ENCODE measurements at regions of chr22 and their contacts with region 1.

Region 1: GRCh38 chr22:35627264-35628041 is 10.3 kb upstream of the MB start:
- DNase-seq: peak; percentile 79
- ATAC-seq: peak; percentile 68
- H3K4me3 ChIP-seq: peak overlapping the region; percentile 63
- H3K27ac ChIP-seq: peak overlapping the region; percentile 98
- H3K4me1 ChIP-seq: peaks cover 34% of the 10 kb centered on the region
- H3K27me3 ChIP-seq: no peaks in the 10 kb centered on the region
- CTCF ChIP-seq: peak; percentile 70

Region 2: DNA sequence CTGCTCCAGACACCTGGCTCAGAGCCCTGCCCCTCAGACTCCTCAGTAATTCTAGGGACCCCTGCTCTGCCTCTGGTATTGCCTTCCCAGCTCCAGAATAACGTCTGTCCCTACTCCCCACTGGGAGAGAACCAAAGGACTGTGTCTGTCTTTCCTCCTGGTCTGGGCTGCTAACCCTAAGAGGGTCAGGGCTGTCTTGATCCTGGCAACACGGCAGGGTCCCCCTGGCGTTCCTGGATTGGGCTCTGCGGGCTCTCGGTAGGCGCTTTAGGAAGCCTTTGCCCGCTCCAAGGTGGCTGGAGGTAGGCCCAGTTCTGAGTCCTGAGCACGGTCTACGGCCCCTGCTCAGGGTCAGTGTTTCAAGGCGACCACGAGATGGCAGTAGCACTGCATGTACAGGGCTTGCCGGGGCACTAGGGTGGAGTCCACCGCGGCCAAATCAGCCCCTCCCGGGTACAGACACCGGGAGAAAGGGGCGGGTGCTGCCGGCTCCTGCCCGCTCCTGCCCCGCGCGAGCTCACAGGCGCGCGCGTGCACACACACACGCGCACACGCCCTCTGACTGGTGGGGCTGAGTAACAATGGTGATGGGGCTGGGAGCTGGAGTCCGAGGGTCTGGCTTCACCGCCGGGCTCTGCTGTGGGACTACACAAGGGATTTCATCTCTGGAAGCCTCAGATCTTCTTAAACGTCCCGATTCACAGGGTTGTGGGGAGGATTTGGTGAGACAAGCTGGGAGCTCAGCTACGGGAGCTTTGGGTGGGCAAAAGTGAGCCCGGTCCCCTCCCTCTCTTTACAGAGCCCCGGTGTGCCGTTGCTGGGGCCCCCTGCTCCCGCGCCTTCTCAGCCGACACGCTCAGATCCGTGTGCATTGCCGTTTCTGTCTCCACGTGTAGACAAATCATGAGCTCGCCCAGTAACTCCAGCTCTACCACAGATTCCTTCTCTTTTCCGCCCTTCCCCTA is 276.6 kb before region 1 on chr22:
- CTCF ChIA-PET with region 1: interaction called, 5 read pairs
- POLR2A ChIA-PET with region 1: interaction called, 3 read pairs
- intact Hi-C with region 1: loop called (anchors 1 kb)
- DNase-seq: peak; percentile 81
- ATAC-seq: peak; percentile 95
- H3K4me3 ChIP-seq: peak overlapping the region; percentile 70
- H3K27ac ChIP-seq: peak overlapping the region; percentile 52
- H3K4me1 ChIP-seq: peaks cover 11% of the 10 kb centered on the region
- H3K27me3 ChIP-seq: no peaks in the 10 kb centered on the region
- CTCF ChIP-seq: peak; percentile 69

Region 3: DNA sequence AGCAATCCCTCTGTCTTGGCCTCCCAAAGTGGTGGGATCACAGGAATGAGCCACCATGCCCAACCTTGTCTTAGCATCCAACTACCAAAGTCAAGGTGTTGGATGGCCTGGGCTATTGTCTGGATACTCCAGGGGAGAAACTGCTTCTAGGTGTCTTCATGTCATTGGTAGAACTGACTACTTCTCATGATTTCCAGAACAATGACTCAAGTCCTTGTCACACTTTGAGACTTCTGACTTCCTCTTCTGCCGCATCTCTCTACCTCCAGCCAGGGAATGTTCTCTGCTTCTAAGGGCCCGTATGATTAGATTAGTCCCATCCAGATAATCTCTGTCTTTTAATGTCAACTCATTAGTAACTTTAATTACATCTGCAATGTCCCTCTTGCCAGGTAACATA is 51.4 kb after region 1 on chr22:
- CTCF ChIA-PET with region 1: no interaction called
- POLR2A ChIA-PET with region 1: no interaction called
- intact Hi-C with region 1: no loop called
- DNase-seq: no peak
- ATAC-seq: no peak
- H3K4me3 ChIP-seq: no peak overlapping the region
- H3K27ac ChIP-seq: no peak overlapping the region
- H3K4me1 ChIP-seq: no peaks in the 10 kb centered on the region
- H3K27me3 ChIP-seq: no peaks in the 10 kb centered on the region
- CTCF ChIP-seq: no peak

Region 4: GRCh38 chr22:35697142-35697541 is 69.7 kb after region 1 on chr22:
- CTCF ChIA-PET with region 1: no interaction called
- POLR2A ChIA-PET with region 1: no interaction called
- intact Hi-C with region 1: no loop called
- DNase-seq: no peak
- ATAC-seq: no peak
- H3K4me3 ChIP-seq: no peak overlapping the region
- H3K27ac ChIP-seq: no peak overlapping the region
- H3K4me1 ChIP-seq: no peaks in the 10 kb centered on the region
- H3K27me3 ChIP-seq: no peaks in the 10 kb centered on the region
- CTCF ChIP-seq: no peak

Region 5: GRCh38 chr22:35742342-35743100 is 115.1 kb after region 1 on chr22:
- CTCF ChIA-PET with region 1: no interaction called
- POLR2A ChIA-PET with region 1: no interaction called
- intact Hi-C with region 1: loop called (anchors 5 kb)
- DNase-seq: peak; percentile 63
- ATAC-seq: peak; percentile 75
- H3K4me3 ChIP-seq: no peak overlapping the region
- H3K27ac ChIP-seq: peak overlapping the region; percentile 77
- H3K4me1 ChIP-seq: peaks cover 22% of the 10 kb centered on the region
- H3K27me3 ChIP-seq: no peaks in the 10 kb centered on the region
- CTCF ChIP-seq: no peak

Region 6: GRCh38 chr22:35840302-35840739 is 212.9 kb after region 1 on chr22:
- CTCF ChIA-PET with region 1: interaction called, 10 read pairs
- POLR2A ChIA-PET with region 1: interaction called, 4 read pairs
- intact Hi-C with region 1: loop called (anchors 1 kb)
- DNase-seq: peak; percentile 91
- ATAC-seq: peak; percentile 75
- H3K4me3 ChIP-seq: peak overlapping the region; percentile 83
- H3K27ac ChIP-seq: peak overlapping the region; percentile 49
- H3K4me1 ChIP-seq: peaks cover 27% of the 10 kb centered on the region; the same call in 1 of the 2 replicates
- H3K27me3 ChIP-seq: no peaks in the 10 kb centered on the region
- CTCF ChIP-seq: no peak

Region 7: GRCh38 chr22:35947794-35948425 is 320.5 kb after region 1 on chr22:
- CTCF ChIA-PET with region 1: interaction called, 14 read pairs
- POLR2A ChIA-PET with region 1: no interaction called
- intact Hi-C with region 1: no loop called
- DNase-seq: peak; percentile 58
- ATAC-seq: peak; percentile 100
- H3K4me3 ChIP-seq: no peak overlapping the region
- H3K27ac ChIP-seq: no peak overlapping the region
- H3K4me1 ChIP-seq: 0 out of 2 replicates have a peak, but pooled peaks cover 3% of the 10 kb centered on the region
- H3K27me3 ChIP-seq: no peaks in the 10 kb centered on the region
- CTCF ChIP-seq: no peak

Region 8: GRCh38 chr22:36123673-36124630 is 496.5 kb after region 1 on chr22:
- CTCF ChIA-PET with region 1: interaction called, 7 read pairs
- POLR2A ChIA-PET with region 1: no interaction called
- intact Hi-C with region 1: loop called (anchors 1 kb)
- DNase-seq: peak; percentile 92
- ATAC-seq: peak; percentile 97
- H3K4me3 ChIP-seq: peak overlapping the region; percentile 43; the same call in 1 of the 2 replicates
- H3K27ac ChIP-seq: 0 out of 2 replicates have a peak overlapping the region, but pooled peaks have one; percentile 32
- H3K4me1 ChIP-seq: peaks cover 4% of the 10 kb centered on the region; the same call in 1 of the 2 replicates
- H3K27me3 ChIP-seq: no peaks in the 10 kb centered on the region
- CTCF ChIP-seq: peak; percentile 91

Measured in PC-3 (cell line).